Activated CD4-positive, alpha-beta T cell treated with anti-CD3 and anti-CD28 coated beads for 36 hours (primary cell): ENCODE measurements at regions of chr10 and their contacts with region 1.

Region 1: DNA sequence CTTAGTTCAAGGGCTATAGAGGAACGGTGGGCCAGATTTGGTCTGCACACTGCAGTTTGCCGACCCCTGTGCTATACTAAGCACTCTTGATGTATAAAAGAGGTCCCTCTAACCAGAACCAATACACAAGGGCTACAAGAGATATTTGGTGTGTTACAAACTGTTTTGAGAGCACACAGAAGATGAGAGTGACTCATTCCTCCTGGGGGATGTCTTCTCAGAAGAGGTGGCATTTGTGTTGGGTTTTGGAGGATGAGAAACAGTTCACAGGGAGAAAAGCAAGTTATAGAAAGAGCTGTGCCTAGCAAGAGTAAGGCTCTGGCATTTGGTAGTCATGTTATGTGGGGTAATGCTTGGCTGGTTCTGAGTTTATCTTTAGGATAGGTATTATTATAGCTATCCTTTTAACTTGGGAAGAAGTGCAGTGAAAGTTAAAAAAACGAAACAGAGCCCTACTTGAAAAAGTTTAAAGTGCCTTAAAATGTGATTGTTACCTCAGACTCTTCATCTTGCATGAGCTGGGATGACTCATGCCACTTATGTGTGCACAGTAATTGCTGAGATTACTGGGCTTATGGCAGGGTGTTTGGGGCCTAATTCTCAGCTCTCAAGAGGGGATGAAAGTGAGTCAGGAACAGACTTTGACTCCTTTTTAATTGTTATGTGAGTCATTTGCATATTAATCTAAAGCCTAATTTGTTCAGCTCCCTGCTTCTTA is 160.4 kb downstream of the KIF20B start:
- DNase-seq: peak; percentile 65
- ATAC-seq: peak; percentile 98
- H3K4me3 Mint-ChIP-seq: no peak overlapping the region
- H3K27ac Mint-ChIP-seq: peak overlapping the region; percentile 81
- H3K4me1 Mint-ChIP-seq: peaks cover 24% of the 10 kb centered on the region
- H3K27me3 Mint-ChIP-seq: no peaks in the 10 kb centered on the region

Region 2: DNA sequence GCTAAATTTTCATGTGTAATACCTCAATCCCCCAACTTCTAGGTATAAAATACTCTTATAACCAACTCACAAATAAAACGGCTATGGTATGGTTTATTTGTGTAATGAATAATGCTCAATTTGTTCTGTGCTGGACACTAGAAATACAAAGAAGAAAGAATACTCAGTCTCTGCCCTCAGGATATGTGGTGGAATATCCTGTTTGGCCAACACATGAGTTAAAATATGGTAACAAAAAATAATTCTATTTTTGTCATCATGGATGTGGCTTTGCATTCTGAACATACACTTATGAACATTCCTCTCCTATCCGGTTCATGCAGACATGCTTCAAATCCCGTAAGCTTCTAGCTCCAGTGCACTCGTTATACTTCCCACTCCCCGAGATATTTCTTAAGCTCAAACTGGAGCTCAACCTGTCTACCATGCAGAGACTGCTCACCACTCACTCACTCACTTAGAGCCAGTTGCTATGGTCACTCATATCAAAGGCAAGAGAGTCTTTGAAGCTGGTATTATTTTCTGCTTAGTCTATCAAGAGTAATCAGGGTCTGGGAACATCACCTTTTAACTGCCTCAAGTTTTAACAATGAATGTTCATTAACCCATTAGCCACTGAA is 272.5 kb before region 1 on chr10:
- CTCF ChIA-PET with region 1: no interaction called
- POLR2A ChIA-PET with region 1: no interaction called
- intact Hi-C with region 1: no loop called
- DNase-seq: no peak
- ATAC-seq: no peak
- H3K4me3 Mint-ChIP-seq: no peak overlapping the region
- H3K27ac Mint-ChIP-seq: no peak overlapping the region
- H3K4me1 Mint-ChIP-seq: no peaks in the 10 kb centered on the region
- H3K27me3 Mint-ChIP-seq: no peaks in the 10 kb centered on the region

Region 3: DNA sequence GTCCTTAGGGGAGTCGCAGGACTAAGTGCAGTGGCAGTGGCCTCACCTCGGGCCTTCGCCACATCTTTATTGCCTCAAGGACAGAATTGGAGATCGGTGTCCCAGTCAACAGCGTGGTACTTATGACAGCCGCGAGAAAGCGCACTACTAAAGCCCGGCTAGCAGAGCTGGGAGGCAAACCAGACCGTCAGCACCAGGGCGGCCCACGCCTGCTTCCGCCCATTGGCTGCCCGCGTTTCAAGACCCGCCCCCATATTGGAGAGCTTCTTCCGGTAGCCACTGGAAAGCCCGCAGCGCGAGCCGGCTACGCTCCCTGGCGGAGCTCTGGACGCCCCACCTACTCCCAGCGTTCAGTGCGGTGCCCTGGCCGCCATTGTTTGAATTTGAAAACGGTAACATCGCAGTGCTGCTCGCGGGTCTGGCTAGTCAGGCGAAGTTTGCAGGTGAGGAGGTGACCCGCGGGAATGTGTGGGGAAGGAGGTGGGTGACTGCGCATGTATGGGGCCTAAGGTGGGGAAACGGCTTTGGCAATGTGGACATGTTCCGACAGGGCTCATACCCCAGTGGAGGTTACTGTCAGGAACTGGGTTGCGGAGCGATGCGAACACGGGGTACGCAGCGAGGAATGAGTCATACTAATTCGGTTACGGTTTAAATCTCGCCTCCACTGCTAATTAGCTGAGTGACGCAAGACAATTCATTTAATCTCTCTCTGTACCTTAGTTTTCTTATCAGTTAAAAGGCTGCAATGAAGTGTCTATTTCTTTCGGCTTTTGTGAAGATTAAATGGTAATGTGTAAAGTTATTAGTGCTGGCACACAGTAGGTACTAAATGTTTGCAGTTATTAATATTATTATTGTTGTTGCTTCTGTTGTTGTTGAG is 160.3 kb before region 1 on chr10 and contains the start of gene KIF20B:
- CTCF ChIA-PET with region 1: no interaction called
- POLR2A ChIA-PET with region 1: no interaction called
- intact Hi-C with region 1: loop called in 1 of 2 experiments (anchors 5 kb)
- DNase-seq: peak; percentile 97
- ATAC-seq: peak; percentile 97
- H3K4me3 Mint-ChIP-seq: peak within 1 kb of the TSS; percentile 99
- H3K27ac Mint-ChIP-seq: peak within 1 kb of the TSS; percentile 98
- H3K4me1 Mint-ChIP-seq: peaks cover 41% of the 10 kb centered on the region
- H3K27me3 Mint-ChIP-seq: no peaks in the 10 kb centered on the region
- total RNA-seq, gene KIF20B: 74.6 to 86.2 TPM

Region 4: DNA sequence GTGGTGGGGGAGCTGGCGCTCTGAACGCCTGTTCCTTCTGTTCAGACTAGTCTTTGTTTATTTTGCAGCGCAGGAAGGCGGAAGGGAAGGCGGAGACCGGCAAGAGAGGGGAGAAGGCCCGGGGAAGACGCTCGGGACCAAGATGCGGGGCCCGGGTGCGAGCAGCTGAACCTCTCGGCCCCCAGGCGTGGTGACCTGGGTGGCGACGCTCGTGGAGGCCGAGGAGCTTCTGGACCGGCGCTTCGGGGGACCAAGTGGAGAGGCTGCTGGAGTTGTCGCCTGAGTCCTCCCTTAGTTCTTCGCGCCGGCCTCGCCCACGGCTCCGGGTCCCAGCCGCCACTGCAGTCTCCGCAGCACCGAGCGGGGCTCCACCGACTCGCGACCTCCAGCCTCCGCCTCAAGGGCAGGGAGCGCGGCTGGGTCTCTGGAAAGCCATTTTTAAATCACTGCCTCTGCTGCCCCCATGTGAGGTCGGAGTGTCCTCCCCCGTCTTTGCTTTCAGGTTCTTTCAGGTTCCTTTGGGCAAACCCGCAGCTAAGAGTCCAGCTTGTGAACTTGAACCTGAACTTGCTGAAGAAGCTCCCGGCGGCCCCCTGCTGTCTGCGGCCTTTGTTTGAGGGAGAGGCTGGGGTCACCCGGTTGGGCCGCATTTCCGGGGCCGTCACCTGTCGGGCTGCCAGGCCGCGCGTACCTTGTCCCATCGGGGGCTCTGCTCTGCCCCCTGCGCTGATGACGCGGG is 24.4 kb before region 1 on chr10:
- CTCF ChIA-PET with region 1: interaction called, 3 read pairs
- POLR2A ChIA-PET with region 1: no interaction called
- intact Hi-C with region 1: loop called in 1 of 2 experiments (anchors 2 kb)
- DNase-seq: peak; percentile 53
- ATAC-seq: peak; percentile 62
- H3K4me3 Mint-ChIP-seq: peak overlapping the region; percentile 70
- H3K27ac Mint-ChIP-seq: peak overlapping the region; percentile 40
- H3K4me1 Mint-ChIP-seq: peaks cover 15% of the 10 kb centered on the region
- H3K27me3 Mint-ChIP-seq: peaks cover 7% of the 10 kb centered on the region

Region 5: DNA sequence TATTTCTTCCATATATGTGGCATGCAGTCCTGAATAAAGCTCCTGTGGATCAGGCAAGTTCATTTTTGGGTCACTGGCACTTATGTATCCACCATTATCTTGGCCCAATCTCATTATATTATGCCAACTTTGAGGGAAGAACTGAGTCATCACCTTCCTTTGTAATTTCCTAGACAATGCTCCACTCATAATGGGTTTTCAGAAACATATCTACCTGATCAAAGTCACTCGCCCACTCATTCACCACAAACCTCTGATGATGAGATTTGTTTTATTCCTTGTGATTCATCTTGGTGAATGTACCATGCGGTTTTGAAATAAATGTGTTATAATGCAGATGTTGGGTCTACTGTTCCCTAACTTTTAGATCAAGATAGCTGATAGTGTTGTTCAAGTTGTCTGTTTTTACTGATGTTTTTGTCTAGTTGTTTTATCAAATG is 365.5 kb after region 1 on chr10:
- CTCF ChIA-PET with region 1: no interaction called
- POLR2A ChIA-PET with region 1: no interaction called
- intact Hi-C with region 1: loop called in 1 of 2 experiments (anchors 1 kb)
- DNase-seq: peak; percentile 79
- ATAC-seq: peak; percentile 94
- H3K4me3 Mint-ChIP-seq: no peak overlapping the region
- H3K27ac Mint-ChIP-seq: no peak overlapping the region
- H3K4me1 Mint-ChIP-seq: peaks cover 20% of the 10 kb centered on the region
- H3K27me3 Mint-ChIP-seq: peaks cover 35% of the 10 kb centered on the region